Activated CD4-positive, alpha-beta T cell treated with anti-CD3 and anti-CD28 coated beads for 36 hours (primary cell): ENCODE measurements at regions of chrX and their contacts with region 1.

Region 1: GRCh38 chrX:140572724-140573123 is 67.9 kb upstream of the SOX3 start:
- DNase-seq: peak; percentile 47
- ATAC-seq: peak; percentile 44
- H3K4me3 Mint-ChIP-seq: no peak overlapping the region
- H3K27ac Mint-ChIP-seq: no peak overlapping the region
- H3K4me1 Mint-ChIP-seq: no peaks in the 10 kb centered on the region
- H3K27me3 Mint-ChIP-seq: no peaks in the 10 kb centered on the region

Region 2: GRCh38 chrX:140664939-140665338 is 92.2 kb after region 1 on chrX:
- CTCF ChIA-PET with region 1: interaction called, 3 read pairs
- POLR2A ChIA-PET with region 1: no interaction called
- intact Hi-C with region 1: loop called in 1 of 2 experiments (anchors 1 kb)
- DNase-seq: no peak
- ATAC-seq: no peak
- H3K4me3 Mint-ChIP-seq: no peak overlapping the region
- H3K27ac Mint-ChIP-seq: no peak overlapping the region
- H3K4me1 Mint-ChIP-seq: no peaks in the 10 kb centered on the region
- H3K27me3 Mint-ChIP-seq: no peaks in the 10 kb centered on the region